ENCODE measurements at regions of chr5 and their contacts with region 1.

Region 1: GRCh38 chr5:26802944-26803343 is 235.4 kb downstream of the CDH9 start:
- DNase-seq: no peak
- ATAC-seq: no peak
- H3K4me3 Mint-ChIP-seq: no peak overlapping the region
- H3K27ac Mint-ChIP-seq: no peak overlapping the region
- H3K4me1 Mint-ChIP-seq: no peaks in the 10 kb centered on the region
- H3K27me3 Mint-ChIP-seq: no peaks in the 10 kb centered on the region

Region 2: DNA sequence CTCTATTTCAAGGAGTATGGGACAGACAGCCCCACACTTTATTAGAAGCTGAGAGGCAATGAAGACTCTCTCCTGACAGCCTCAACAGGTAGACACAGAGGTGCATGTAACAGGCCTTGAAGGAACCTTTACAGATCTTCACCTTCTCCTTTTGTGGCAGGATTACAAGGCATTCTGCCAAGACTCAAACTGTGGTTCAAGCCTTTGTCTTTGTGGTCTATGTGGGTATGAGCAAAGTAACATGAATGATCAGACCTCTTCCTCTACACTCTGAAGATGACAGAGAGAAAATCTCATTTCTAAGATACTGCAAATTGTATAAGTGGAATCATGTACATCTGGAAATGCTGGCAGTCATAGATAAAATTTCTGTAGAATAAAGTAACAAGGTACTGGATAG is 111.5 kb before region 1 on chr5:
- CTCF ChIA-PET with region 1: no interaction called
- POLR2A ChIA-PET with region 1: no interaction called
- intact Hi-C with region 1: no loop called
- DNase-seq: no peak
- ATAC-seq: no peak
- H3K4me3 Mint-ChIP-seq: no peak overlapping the region
- H3K27ac Mint-ChIP-seq: no peak overlapping the region
- H3K4me1 Mint-ChIP-seq: no peaks in the 10 kb centered on the region
- H3K27me3 Mint-ChIP-seq: no peaks in the 10 kb centered on the region

Region 3: DNA sequence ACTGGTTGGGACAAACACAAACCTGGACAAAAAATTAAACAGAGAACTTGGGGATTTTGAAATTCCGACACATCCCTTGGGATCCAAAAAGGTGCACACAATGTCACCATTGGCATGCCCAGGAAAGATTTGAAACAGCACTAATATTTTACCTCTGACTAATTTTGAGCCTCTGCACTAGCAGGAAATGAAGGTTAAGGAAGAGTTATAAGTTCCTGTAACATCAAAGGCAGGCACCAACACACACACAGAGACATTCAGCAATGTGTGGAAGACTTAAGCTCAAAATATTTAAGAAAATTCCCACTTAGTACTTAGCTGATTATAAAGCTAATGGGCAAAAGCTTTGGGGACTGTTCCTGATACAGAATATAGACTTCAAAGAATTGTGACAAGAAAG is 11.5 kb before region 1 on chr5:
- CTCF ChIA-PET with region 1: no interaction called
- POLR2A ChIA-PET with region 1: no interaction called
- intact Hi-C with region 1: loop called in 1 of 2 experiments (anchors 1 kb)
- DNase-seq: no peak
- ATAC-seq: no peak
- H3K4me3 Mint-ChIP-seq: no peak overlapping the region
- H3K27ac Mint-ChIP-seq: no peak overlapping the region
- H3K4me1 Mint-ChIP-seq: no peaks in the 10 kb centered on the region
- H3K27me3 Mint-ChIP-seq: no peaks in the 10 kb centered on the region